ENCODE measurements at regions of chrX and their contacts with region 1.

Region 1: GRCh38 chrX:151082076-151082948 is 94.1 kb upstream of the GPR50 start:
- DNase-seq: peak; percentile 76
- ATAC-seq: peak; percentile 93 to 98
- H3K4me3 ChIP-seq: peak overlapping the region; percentile 6
- H3K27ac ChIP-seq: no peak overlapping the region
- H3K4me1 ChIP-seq: no peaks in the 10 kb centered on the region
- H3K27me3 ChIP-seq: no peaks in the 10 kb centered on the region
- CTCF ChIP-seq: peak; percentile 82

Region 2: DNA sequence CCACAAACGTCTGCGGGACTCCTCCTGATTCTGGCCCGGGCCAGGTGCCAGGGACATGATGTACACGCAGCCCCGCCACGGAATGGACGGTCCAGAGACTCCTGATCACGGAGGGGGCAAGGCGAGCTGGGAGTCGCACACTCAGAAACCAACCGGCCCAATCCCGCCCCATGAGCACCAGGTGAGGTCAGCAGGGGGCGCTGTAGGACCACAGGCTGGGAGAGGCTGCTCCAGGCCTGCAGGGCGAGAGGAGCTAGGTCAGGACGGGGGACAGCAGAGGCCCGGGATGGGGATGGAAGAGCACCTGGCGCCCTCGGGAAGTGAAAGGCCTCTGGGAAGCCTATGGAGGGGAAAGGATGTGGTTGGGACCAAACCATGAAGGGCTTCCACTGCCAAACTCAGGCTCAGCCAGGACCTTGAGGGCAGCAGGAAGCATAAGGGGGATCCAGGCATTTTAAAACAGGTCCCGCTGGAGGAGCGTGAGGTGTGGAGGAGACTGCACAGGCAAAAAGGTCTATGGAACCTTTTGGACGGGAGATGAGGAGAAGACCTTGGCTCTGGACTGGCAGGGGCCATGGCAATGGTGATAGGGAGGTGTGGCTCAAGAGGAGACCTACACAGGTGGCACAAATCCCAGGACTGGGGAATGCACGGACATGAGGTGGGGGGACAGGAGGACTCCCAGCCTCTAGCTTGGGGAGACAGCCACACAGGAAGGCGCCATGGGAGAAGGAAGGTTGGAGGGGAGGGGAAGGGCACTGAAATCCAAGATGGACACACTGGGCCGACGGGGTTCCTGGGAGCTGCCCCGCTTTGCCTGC is 310.0 kb before region 1 on chrX:
- intact Hi-C with region 1: loop called (anchors 5 kb)
- DNase-seq: peak; percentile 81
- ATAC-seq: peak; percentile 84 to 91
- H3K4me3 ChIP-seq: no peak overlapping the region
- H3K27ac ChIP-seq: no peak overlapping the region
- H3K4me1 ChIP-seq: no peaks in the 10 kb centered on the region
- H3K27me3 ChIP-seq: no peaks in the 10 kb centered on the region
- CTCF ChIP-seq: peak; percentile 79

Region 3: GRCh38 chrX:150954951-150955350 is 127.4 kb before region 1 on chrX:
- intact Hi-C with region 1: no loop called
- DNase-seq: no peak
- ATAC-seq: no peak
- H3K4me3 ChIP-seq: no peak overlapping the region
- H3K27ac ChIP-seq: no peak overlapping the region
- H3K4me1 ChIP-seq: no peaks in the 10 kb centered on the region
- H3K27me3 ChIP-seq: no peaks in the 10 kb centered on the region
- CTCF ChIP-seq: no peak

Region 4: DNA sequence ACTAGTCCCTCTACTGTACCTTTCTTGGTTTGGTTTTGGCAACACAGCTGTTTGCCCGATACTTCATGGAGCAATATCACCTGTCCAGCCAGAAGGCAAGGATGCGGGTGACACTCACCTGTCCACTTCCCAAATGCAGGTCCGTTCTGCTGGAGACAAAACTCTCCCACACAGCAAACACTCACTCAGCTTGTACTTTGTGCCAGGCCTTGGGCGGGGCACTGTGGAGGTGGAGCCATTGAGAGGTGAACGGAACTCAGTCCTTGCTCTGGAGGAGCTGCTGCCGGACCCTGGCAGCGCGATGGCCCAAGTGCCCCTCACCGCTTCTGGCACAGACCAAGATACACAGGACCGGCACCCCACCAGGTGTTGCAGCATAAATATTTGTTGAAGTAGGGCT is 114.5 kb before region 1 on chrX:
- intact Hi-C with region 1: no loop called
- DNase-seq: no peak
- ATAC-seq: no peak
- H3K4me3 ChIP-seq: no peak overlapping the region
- H3K27ac ChIP-seq: no peak overlapping the region
- H3K4me1 ChIP-seq: no peaks in the 10 kb centered on the region
- H3K27me3 ChIP-seq: no peaks in the 10 kb centered on the region
- CTCF ChIP-seq: no peak